Stomach (tissue), 19 donors: ENCODE measurements at regions of chr1 and their contacts with region 1.

Region 1: GRCh38 chr1:110619412-110620249 is 13.5 kb upstream of the KCNA2 start:
- DNase-seq: peak; percentile 84 to 93
- H3K4me3 ChIP-seq: peak overlapping the region; percentile 4 to 31 (median 23)
- H3K27ac ChIP-seq: peak overlapping the region in 3 of 5 donors; percentile 9 to 66 (median 31)
- H3K4me1 ChIP-seq: peaks cover 0 to 14% (median 12%) of the 10 kb centered on the region in 4 donors
- H3K27me3 ChIP-seq: peaks cover 0 to 59% (median 11%) of the 10 kb centered on the region in 3 donors
- CTCF ChIP-seq: peak in 6 of 7 experiments; percentile 47 to 97 (median 80)
- EP300 ChIP-seq: no peak
- POLR2A ChIP-seq: no peak

Region 2: GRCh38 chr1:110069404-110070281 is 550.0 kb before region 1 on chr1:
- intact Hi-C with region 1: no loop called
- DNase-seq: peak in 1 of 2 donors; percentile 30
- H3K4me3 ChIP-seq: peak overlapping the region; percentile 20 to 45 (median 36)
- H3K27ac ChIP-seq: no peak overlapping the region
- H3K4me1 ChIP-seq: peaks cover 34 to 36% (median 36%) of the 10 kb centered on the region in 4 donors
- H3K27me3 ChIP-seq: peaks cover 27 to 88% (median 68%) of the 10 kb centered on the region in 3 donors
- CTCF ChIP-seq: no peak
- EP300 ChIP-seq: no peak
- POLR2A ChIP-seq: no peak

Region 3: DNA sequence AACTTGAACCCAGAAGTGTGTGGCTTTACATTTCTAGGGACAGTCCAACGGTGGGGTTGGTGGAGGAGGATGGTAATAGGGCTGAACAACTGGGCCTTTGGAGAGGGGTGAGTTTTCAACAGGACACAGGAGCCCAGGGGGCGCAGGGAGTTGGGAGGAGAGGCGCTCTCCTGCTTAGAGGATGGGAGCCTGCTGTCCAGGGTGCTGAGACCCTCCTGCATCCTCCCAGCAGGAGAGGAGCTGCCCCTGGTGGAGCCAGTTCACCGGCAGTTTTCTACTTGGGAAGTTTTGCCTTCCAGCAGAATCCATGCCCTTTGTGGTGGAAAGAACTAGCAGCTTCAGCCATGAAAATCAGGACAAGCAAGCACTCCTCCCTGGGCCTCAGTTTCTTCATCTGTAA is 400.9 kb before region 1 on chr1:
- intact Hi-C with region 1: no loop called
- DNase-seq: peak in 1 of 2 donors; percentile 42
- H3K4me3 ChIP-seq: no peak overlapping the region
- H3K27ac ChIP-seq: no peak overlapping the region
- H3K4me1 ChIP-seq: peaks cover 16 to 24% (median 21%) of the 10 kb centered on the region in 4 donors
- H3K27me3 ChIP-seq: no peaks in the 10 kb centered on the region
- CTCF ChIP-seq: no peak
- EP300 ChIP-seq: no peak
- POLR2A ChIP-seq: no peak

Region 4: GRCh38 chr1:110780600-110781484 is 161.2 kb after region 1 on chr1:
- intact Hi-C with region 1: loop called (anchors 10 kb)
- DNase-seq: peak; percentile 75 to 85
- H3K4me3 ChIP-seq: no peak overlapping the region
- H3K27ac ChIP-seq: no peak overlapping the region
- H3K4me1 ChIP-seq: peaks cover 0 to 7% (median 3%) of the 10 kb centered on the region in 4 donors
- H3K27me3 ChIP-seq: peaks cover 0 to 42% (median 0%) of the 10 kb centered on the region in 3 donors
- CTCF ChIP-seq: peak in 4 of 7 experiments; percentile 57 to 74 (median 69)
- EP300 ChIP-seq: no peak
- POLR2A ChIP-seq: no peak